ENCODE measurements at regions of chr13 and their contacts with region 1.

Region 1: DNA sequence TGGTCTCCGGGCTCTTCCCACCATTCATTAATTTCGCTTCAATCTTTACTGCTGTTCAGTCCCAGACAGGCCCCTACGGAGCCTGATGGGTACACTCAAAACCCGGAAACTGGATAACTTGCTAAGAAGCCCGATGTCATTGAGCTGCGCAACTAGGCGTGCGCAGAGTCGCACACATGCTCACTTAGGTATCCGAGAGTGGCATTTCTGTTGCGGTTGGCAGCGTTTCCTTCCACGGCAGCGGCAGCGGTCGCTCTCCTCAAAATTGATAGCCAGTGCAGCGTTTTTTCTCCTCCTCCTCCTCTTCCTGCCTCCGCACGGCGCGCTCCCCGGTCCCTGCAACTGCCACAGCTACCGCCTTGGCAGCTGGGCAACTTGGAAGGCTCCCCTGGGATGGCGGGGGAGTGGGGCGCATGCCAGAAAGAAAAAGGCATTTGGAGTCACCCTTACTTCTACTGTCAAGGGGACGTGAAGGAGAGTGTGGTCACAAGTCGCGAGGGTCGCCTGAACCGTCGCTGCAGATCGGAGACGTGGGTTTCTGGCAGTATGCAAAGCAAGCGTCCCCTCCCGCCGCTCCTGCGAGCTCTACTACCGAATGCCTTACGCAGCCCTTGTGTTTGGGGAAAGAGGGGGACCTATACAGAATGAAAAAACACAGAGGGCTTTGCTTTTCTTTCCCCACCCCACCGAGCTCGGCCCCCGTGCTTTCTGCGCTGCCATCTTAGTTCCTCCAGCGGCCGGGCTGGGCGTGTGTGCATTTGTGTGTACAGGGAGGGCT is 2.4 kb upstream of the MYCBP2 start:
- DNase-seq: peak; percentile 96
- ATAC-seq: peak; percentile 69
- H3K4me3 Mint-ChIP-seq: peak overlapping the region; percentile 95
- H3K27ac Mint-ChIP-seq: peak overlapping the region; percentile 96
- H3K4me1 Mint-ChIP-seq: peaks cover 42% of the 10 kb centered on the region
- H3K27me3 Mint-ChIP-seq: no peaks in the 10 kb centered on the region

Region 2: DNA sequence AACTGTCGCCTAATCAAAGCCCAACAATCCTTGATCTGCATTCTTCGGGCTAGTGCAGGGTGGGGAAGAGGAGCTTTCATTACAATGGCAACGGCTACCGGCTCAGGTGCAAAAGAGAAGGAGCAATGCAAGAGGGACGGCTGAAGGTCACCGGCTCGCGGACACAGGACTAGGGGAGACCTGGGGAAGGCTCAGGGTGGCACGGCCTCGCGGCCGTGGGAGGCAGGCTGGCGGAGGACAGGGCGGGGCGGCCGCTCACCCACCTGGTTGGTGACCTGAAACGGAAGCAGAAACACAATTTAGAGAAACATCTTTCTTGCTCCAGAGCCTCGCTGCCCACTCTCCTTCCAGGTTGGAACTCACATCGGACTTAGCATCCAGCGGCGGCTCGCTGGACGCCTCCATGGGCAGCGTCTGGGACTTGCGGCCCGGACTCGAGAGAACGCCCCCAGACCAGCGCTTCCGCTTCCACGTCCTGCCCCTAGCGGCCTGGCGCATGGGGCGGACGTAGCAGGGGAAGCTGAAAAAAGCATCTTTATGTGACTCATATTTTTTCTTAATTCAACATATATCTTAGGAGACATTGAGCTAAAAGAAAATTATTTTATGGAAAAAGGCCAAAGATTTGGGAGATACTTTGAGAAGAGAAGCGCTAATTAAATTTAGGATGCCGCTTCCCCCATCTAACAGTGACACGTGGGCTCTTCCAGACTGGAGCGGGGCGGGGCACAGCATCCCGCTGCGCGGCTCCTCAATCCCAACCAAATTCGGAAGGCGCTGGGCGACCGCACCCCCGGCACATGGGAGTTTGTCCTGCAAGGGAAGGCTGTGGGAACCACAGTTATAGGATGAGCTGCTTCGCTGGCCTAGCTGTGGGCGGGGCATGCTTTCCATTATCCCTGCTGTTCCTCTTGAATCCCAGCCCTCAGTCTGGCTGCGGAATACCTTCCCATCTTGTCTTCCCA is 1791.6 kb before region 1 on chr13 and contains the start of gene COMMD6:
- CTCF ChIA-PET with region 1: no interaction called
- POLR2A ChIA-PET with region 1: no interaction called
- intact Hi-C with region 1: loop called in 1 of 2 experiments (anchors 10 kb)
- DNase-seq: peak; percentile 89
- ATAC-seq: peak; percentile 96
- H3K4me3 Mint-ChIP-seq: peak within 1 kb of the TSS; percentile 100
- H3K27ac Mint-ChIP-seq: peak within 1 kb of the TSS; percentile 96
- H3K4me1 Mint-ChIP-seq: peaks cover 46% of the 10 kb centered on the region
- H3K27me3 Mint-ChIP-seq: no peaks in the 10 kb centered on the region
- total RNA-seq, gene COMMD6: 103 to 121 TPM

Region 3: GRCh38 chr13:76991796-76992547 is 337.4 kb before region 1 on chr13 and contains the start of gene CLN5:
- CTCF ChIA-PET with region 1: interaction called, 3 read pairs
- POLR2A ChIA-PET with region 1: no interaction called
- intact Hi-C with region 1: loop called (anchors 1 to 2 kb)
- DNase-seq: peak; percentile 97
- ATAC-seq: peak; percentile 93
- H3K4me3 Mint-ChIP-seq: peak within 1 kb of the TSS; percentile 97
- H3K27ac Mint-ChIP-seq: peak within 1 kb of the TSS; percentile 99
- H3K4me1 Mint-ChIP-seq: peaks cover 36% of the 10 kb centered on the region
- H3K27me3 Mint-ChIP-seq: peaks cover 3% of the 10 kb centered on the region
- total RNA-seq, gene CLN5: 14.5 to 14.9 TPM

Region 4: GRCh38 chr13:77291774-77292173 is 37.5 kb before region 1 on chr13:
- CTCF ChIA-PET with region 1: interaction called, 5 read pairs
- POLR2A ChIA-PET with region 1: interaction called, 5 read pairs
- intact Hi-C with region 1: loop called (anchors 1 kb)
- DNase-seq: no peak
- ATAC-seq: peak; percentile 14
- H3K4me3 Mint-ChIP-seq: no peak overlapping the region
- H3K27ac Mint-ChIP-seq: peak overlapping the region; percentile 68
- H3K4me1 Mint-ChIP-seq: peaks cover 35% of the 10 kb centered on the region
- H3K27me3 Mint-ChIP-seq: no peaks in the 10 kb centered on the region

Region 5: DNA sequence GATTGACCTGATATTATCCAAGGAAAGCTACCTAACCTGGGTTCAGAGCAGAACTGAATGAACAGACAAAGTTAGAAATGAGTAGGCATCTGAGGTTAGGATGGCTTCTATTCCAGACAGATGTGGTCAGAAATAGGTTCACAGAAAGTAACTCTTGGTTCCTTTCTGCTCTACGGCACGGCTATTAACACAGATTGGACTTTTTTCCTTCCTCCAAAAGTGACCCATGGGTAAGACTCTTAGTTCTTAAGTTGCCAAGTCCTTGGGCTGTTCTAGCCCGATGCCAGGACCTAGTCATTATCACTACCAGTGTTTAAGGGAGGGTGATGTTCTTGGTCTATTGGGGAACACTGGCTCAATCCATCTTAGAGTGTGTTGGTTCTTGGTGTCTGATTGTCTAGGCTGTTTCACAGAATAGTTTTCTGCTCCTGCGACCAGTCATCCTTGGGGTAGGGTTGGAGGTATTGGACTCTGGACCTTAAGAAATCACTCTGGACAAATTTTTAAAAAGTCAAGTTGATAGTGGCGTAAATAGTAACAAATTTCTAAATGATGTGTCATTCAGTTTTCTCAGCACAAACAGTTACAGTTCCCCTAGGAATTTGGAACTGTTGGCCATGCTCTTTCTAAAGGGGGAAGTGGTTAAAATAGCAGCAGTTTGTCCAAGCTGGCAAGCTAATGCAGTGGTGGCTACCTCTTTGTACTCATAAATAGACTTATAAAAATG is 57.7 kb after region 1 on chr13:
- CTCF ChIA-PET with region 1: interaction called, 5 read pairs
- POLR2A ChIA-PET with region 1: interaction called, 3 read pairs
- intact Hi-C with region 1: loop called in 1 of 2 experiments (anchors 2 kb)
- DNase-seq: no peak
- ATAC-seq: peak; percentile 30
- H3K4me3 Mint-ChIP-seq: no peak overlapping the region
- H3K27ac Mint-ChIP-seq: no peak overlapping the region
- H3K4me1 Mint-ChIP-seq: peaks cover 10% of the 10 kb centered on the region
- H3K27me3 Mint-ChIP-seq: no peaks in the 10 kb centered on the region

Region 6: GRCh38 chr13:77697217-77698103 is 368.1 kb after region 1 on chr13 and contains the start of gene SLAIN1:
- CTCF ChIA-PET with region 1: no interaction called
- POLR2A ChIA-PET with region 1: no interaction called
- intact Hi-C with region 1: loop called (anchors 1 kb)
- DNase-seq: peak; percentile 88
- ATAC-seq: peak; percentile 73
- H3K4me3 Mint-ChIP-seq: peak within 1 kb of the TSS; percentile 95
- H3K27ac Mint-ChIP-seq: peak within 1 kb of the TSS; percentile 60
- H3K4me1 Mint-ChIP-seq: peaks cover 35% of the 10 kb centered on the region
- H3K27me3 Mint-ChIP-seq: no peaks in the 10 kb centered on the region
- total RNA-seq, gene SLAIN1: 26.7 to 39.8 TPM

Region 7: DNA sequence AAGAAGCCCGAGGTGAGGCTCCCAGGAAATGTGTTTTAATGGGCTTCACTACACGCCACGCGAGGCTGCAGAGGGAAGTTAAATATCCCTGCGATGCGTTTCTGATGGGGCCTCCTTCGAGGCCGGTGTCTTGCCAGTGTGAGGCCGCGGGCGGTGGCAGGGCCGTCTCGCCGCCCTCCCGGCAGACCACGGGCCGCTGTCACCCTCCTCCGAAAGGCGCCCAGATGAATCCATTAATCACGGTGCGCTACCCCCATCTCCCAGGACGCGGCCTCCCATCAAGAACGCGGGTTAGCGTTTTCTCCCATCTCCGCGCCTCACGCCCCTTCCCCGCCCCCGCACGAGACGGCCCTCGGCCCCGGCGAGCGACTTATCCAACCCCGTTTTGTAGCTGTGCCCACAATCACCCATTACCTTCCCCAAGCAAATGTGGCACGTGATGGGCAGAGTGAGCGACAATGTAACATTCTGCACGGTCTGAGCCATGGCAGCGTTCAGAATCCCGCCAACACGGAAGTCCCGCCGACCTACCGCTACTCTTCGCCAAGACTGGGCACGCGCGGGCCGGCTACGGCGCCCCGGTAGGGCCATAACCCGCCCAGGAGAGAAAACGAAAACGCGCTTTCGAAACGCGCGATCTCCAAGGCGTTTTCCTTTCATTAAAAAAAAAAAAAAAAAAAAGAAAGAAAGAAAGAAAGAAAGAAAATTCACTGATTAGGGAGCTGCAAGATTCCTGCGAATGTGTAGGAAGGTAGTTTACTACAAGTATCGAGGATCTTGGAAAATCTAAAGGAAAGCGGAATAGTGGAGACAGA is 1329.5 kb after region 1 on chr13 and contains the start of gene OBI1:
- CTCF ChIA-PET with region 1: no interaction called
- POLR2A ChIA-PET with region 1: no interaction called
- intact Hi-C with region 1: loop called in 1 of 2 experiments (anchors 1 kb)
- DNase-seq: peak; percentile 94
- ATAC-seq: peak; percentile 93
- H3K4me3 Mint-ChIP-seq: peak within 1 kb of the TSS; percentile 85
- H3K27ac Mint-ChIP-seq: peak within 1 kb of the TSS; percentile 97
- H3K4me1 Mint-ChIP-seq: peaks cover 33% of the 10 kb centered on the region
- H3K27me3 Mint-ChIP-seq: no peaks in the 10 kb centered on the region
- total RNA-seq, gene OBI1: 20.5 to 20.6 TPM

Measured in activated CD4-positive, alpha-beta T cell treated with anti-CD3 and anti-CD28 coated beads for 36 hours (primary cell).